ENCODE measurements at regions of chr19 and their contacts with region 1.

Region 1: DNA sequence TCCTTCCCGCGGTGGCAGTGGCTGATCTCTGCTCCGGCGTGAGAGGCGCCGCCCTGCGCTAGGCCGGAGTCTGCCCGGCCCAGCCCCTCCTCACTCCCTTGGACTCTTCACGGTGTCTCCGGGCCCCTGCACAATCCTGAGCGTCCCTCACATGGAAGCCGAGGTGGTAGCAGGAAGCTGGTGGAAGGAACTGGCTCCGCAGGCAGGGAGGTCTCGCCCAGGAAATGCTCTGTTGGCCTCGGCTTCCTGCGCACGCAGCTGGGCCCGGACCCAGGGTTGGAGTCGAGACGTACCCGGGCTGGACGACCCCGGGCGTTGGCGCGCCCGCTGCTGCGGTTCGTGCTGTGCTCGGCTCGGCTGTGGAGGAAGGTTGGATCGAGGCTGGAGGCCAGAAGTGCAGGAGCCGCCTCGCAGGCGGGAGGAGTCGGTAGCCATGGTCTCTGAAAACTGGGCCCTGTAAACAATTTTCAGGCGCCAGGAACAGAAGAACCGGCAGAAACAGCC is 46.3 kb downstream of the ZNF724 start:
- DNase-seq: no peak
- ATAC-seq: no peak
- H3K4me3 ChIP-seq: no peak overlapping the region
- H3K4me3 Mint-ChIP-seq: no peak overlapping the region
- H3K27ac ChIP-seq: no peak overlapping the region
- H3K27ac Mint-ChIP-seq: no peak overlapping the region
- H3K4me1 ChIP-seq: no peaks in the 10 kb centered on the region
- H3K4me1 Mint-ChIP-seq: no peaks in the 10 kb centered on the region
- H3K27me3 ChIP-seq: no peaks in the 10 kb centered on the region
- H3K27me3 Mint-ChIP-seq: peaks cover 2% of the 10 kb centered on the region
- CTCF ChIP-seq: no peak

Region 2: DNA sequence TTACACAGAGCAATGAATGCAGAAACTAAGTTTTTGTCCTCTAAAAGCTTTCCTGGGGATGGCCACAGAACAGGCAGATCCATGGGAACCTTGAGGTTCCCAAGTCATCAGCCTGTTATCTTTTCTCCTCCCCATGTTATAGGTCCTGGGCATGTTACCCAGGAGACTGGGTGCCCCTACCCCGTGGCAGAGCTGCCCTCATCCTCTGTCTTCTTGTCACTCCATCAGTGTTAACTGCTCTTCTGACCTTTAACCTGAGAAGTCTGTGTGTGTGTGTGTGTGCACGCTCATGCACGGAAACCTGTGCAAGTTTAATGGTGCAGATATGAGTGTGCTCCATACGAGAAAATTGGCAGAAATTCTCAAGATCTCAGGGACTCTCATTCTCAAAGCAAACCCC is 90.2 kb after region 1 on chr19:
- CTCF ChIA-PET with region 1: no interaction called
- POLR2A ChIA-PET with region 1: no interaction called
- intact Hi-C with region 1: loop called in 1 of 2 experiments (anchors 5 kb)
- DNase-seq: no peak
- ATAC-seq: no peak
- H3K4me3 ChIP-seq: no peak overlapping the region
- H3K4me3 Mint-ChIP-seq: no peak overlapping the region
- H3K27ac ChIP-seq: no peak overlapping the region
- H3K27ac Mint-ChIP-seq: no peak overlapping the region
- H3K4me1 ChIP-seq: no peaks in the 10 kb centered on the region
- H3K4me1 Mint-ChIP-seq: no peaks in the 10 kb centered on the region
- H3K27me3 ChIP-seq: no peaks in the 10 kb centered on the region
- H3K27me3 Mint-ChIP-seq: no peaks in the 10 kb centered on the region
- CTCF ChIP-seq: no peak